Panc1 (cell line): ENCODE measurements at regions of chr3 and their contacts with region 1.

Region 1: GRCh38 chr3:197959898-197960693 is at the start of gene LMLN:
- DNase-seq: peak; percentile 83
- ATAC-seq: peak; percentile 91
- H3K4me3 ChIP-seq: peak within 1 kb of the TSS; percentile 69 to 94
- H3K27ac ChIP-seq: peak within 1 kb of the TSS; percentile 99
- H3K4me1 ChIP-seq: peaks cover 37% of the 10 kb centered on the region
- H3K27me3 ChIP-seq: no peaks in the 10 kb centered on the region
- CTCF ChIP-seq: no peak
- total RNA-seq, gene LMLN: 21.8 TPM

Region 2: GRCh38 chr3:197577366-197578074 is 382.6 kb before region 1 on chr3:
- CTCF ChIA-PET with region 1: no interaction called
- POLR2A ChIA-PET with region 1: no interaction called
- in situ Hi-C with region 1: no loop called
- intact Hi-C with region 1: no loop called
- DNase-seq: no peak
- ATAC-seq: no peak
- H3K4me3 ChIP-seq: no peak overlapping the region
- H3K27ac ChIP-seq: no peak overlapping the region
- H3K4me1 ChIP-seq: no peaks in the 10 kb centered on the region
- H3K27me3 ChIP-seq: no peaks in the 10 kb centered on the region; the same call in none of the 2 replicates
- CTCF ChIP-seq: no peak

Region 3: DNA sequence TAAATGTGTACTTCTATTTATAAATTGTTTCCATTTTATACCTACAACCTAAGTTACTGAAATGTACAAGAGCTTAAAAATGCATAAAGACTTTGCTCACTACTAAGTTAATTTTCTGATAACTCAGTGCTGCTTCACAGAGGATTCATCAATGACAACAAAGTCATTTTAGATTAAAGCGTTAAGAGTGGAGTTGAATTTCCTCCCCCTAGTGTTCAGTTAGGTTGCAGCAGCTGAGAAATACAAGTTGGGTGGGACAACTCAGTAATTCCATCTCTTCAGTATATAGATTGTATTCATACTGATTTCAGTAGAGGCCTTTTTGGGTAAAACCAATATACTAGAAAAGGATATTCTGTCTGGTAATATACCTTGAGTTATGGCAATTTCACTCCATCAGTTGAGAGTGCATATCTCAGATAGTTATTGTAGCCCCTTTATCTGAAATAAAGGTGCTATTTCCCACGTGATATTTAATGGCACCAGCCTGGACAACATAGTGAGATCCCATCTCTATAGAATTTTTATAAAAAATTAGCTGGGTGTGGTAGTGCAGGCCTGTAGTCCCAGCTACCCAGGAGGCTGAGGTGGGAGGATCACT is 17.0 kb before region 1 on chr3:
- CTCF ChIA-PET with region 1: interaction called, 10 read pairs
- POLR2A ChIA-PET with region 1: no interaction called
- in situ Hi-C with region 1: no loop called
- intact Hi-C with region 1: no loop called
- DNase-seq: no peak
- ATAC-seq: peak; percentile 86
- H3K4me3 ChIP-seq: no peak overlapping the region
- H3K27ac ChIP-seq: no peak overlapping the region
- H3K4me1 ChIP-seq: no peaks in the 10 kb centered on the region
- H3K27me3 ChIP-seq: no peaks in the 10 kb centered on the region
- CTCF ChIP-seq: peak; percentile 84; the same call in 1 of the 2 replicates

Region 4: GRCh38 chr3:198051836-198052235 is 91.7 kb after region 1 on chr3:
- CTCF ChIA-PET with region 1: no interaction called
- POLR2A ChIA-PET with region 1: no interaction called
- in situ Hi-C with region 1: no loop called
- intact Hi-C with region 1: no loop called
- DNase-seq: no peak
- ATAC-seq: no peak
- H3K4me3 ChIP-seq: no peak overlapping the region
- H3K27ac ChIP-seq: no peak overlapping the region
- H3K4me1 ChIP-seq: no peaks in the 10 kb centered on the region
- H3K27me3 ChIP-seq: no peaks in the 10 kb centered on the region
- CTCF ChIP-seq: no peak

Region 5: DNA sequence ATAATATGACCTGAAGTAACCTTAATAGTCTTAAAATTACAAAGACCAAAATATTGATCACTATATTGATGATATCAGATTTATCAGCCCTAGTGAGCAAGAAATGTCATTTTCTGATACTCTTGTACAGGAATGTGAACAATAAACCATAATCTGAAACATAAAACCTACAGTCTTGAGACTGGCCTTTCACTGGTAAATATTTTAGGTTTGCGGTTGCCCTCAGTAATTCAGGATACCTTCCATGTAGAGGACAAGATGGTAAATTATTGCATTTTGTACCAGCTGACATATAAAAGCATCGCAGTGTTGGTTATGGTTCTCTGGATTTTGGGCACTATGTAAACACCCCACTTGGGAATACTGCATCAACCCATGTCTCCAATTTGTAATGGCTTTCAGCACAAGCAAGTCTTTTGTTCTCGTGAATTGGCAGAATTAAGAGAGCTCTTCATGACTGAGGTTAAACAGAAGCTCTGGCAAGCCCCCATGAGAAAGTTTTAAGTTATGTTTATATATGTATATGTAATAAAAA is 128.4 kb after region 1 on chr3:
- CTCF ChIA-PET with region 1: no interaction called
- POLR2A ChIA-PET with region 1: interaction called, 4 read pairs
- in situ Hi-C with region 1: no loop called
- intact Hi-C with region 1: loop called (anchors 5 kb)
- DNase-seq: no peak
- ATAC-seq: no peak
- H3K4me3 ChIP-seq: no peak overlapping the region
- H3K27ac ChIP-seq: no peak overlapping the region
- H3K4me1 ChIP-seq: no peaks in the 10 kb centered on the region; the same call in 1 of the 2 replicates
- H3K27me3 ChIP-seq: peaks cover 61% of the 10 kb centered on the region
- CTCF ChIP-seq: no peak